Psoas muscle (tissue), 8 donors: ENCODE measurements at regions of chr15 and their contacts with region 1.

Region 1: GRCh38 chr15:80152180-80152845 is 486 bp upstream of the FAH start:
- DNase-seq: peak; percentile 98 to 99
- ATAC-seq: peak; percentile 86 to 92 (median 88)
- H3K4me3 ChIP-seq: peak overlapping the region; percentile 75
- H3K27ac ChIP-seq: peak overlapping the region; percentile 88
- H3K4me1 ChIP-seq: peaks cover 35% of the 10 kb centered on the region
- H3K27me3 ChIP-seq: no peaks in the 10 kb centered on the region
- CTCF ChIP-seq: no peak

Region 2: DNA sequence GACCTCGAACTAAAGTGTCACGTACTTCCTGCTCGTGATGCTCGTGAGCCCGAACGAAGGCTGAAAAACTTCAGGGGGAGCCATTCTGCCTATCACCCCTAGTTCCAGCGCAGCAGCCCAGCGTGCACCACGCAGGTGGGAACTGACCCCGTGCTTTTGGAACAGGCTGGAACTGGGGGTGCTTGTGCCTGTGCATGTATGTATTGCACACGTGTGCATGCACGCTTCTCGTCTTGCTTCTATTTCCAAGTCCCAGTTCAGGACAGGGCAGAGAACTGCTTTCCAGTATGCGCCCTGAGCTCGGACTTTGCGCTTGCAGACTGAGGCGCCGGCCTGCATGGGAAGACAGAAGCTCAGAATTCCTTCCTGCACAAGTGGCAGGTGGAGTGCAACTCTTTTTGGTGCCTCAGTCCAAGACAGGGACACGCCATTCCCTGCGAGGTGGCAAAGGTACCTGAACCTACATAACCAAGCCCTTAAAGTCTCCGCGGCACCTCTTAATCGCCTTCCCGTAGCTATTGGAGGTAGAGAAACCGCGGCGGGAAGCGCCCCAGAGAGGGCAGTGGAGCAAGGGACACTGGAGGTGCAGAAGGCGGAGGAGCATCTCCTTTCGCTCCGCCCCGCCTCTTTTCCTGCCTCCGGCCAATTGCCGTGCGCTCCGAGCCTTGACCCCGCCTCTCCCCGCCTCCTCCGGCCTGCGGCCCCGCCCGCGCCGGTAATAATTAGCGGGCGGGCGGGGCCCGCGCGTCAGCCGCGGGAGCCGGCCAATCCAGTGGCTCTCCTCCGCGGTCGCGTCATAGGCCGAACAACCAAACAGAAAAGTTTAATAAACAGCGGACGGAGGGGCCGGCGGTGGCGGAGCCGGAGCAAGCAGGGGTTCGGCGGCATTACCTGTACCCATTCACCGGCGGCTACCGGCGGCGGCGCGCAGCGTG is 93.2 kb before region 1 on chr15 and contains the start of gene ZFAND6:
- intact Hi-C with region 1: loop called (anchors 2 to 10 kb)
- DNase-seq: peak; percentile 95 to 98
- ATAC-seq: peak; percentile 97 to 98 (median 98)
- H3K4me3 ChIP-seq: peak within 1 kb of the TSS; percentile 84
- H3K27ac ChIP-seq: peak within 1 kb of the TSS; percentile 97
- H3K4me1 ChIP-seq: peaks cover 25% of the 10 kb centered on the region
- H3K27me3 ChIP-seq: no peaks in the 10 kb centered on the region
- CTCF ChIP-seq: no peak
- total RNA-seq, gene ZFAND6: 66.3 to 102 (median 86.8) TPM

Region 3: DNA sequence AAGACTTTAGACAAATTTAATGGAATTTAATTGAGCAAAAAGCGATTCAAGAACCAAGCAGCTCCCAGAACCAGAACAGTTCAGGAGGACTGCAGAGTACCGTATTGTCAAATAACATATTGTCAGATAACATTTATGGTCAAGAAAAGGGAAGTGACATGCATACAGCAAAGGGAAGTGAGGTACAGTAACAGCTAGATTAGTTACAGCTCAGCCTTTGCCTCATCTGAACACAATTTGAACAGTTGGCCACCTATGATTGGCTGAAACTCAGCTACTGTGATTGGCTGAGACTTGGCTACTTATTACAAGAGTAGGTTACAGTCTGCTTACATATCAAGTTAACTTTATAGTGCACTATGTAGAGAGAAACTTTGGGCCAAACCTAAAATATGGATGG is 70.9 kb before region 1 on chr15:
- intact Hi-C with region 1: loop called in 1 of 2 experiments (anchors 5 kb)
- DNase-seq: no peak
- ATAC-seq: peak in 1 of 4 donors; percentile 42
- H3K4me3 ChIP-seq: no peak overlapping the region
- H3K27ac ChIP-seq: no peak overlapping the region
- H3K4me1 ChIP-seq: peaks cover 10% of the 10 kb centered on the region
- H3K27me3 ChIP-seq: no peaks in the 10 kb centered on the region
- CTCF ChIP-seq: no peak